ENCODE measurements at regions of chr6 and their contacts with region 1.

Region 1: DNA sequence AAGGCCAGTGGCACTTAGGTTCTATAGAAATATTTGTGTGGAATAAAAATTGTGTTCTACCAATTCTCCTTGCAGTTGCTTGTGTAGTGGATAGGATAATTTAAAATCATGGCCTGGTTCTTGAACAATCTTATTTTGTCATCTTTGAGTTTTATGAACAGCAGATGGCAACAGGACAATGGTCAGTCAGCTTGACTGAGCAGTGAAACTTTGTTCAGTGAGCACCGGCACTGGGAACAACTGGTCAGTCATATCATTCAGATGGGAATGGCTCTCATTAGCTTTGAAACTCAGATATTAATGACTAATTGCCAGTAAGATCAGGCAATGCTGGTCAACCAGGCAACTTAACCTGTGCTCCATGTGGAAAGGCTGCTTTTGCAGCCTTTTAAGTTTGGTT is 129.2 kb downstream of the BCKDHB start:
- DNase-seq: no peak
- H3K4me3 Mint-ChIP-seq: no peak overlapping the region
- H3K27ac Mint-ChIP-seq: no peak overlapping the region
- H3K4me1 Mint-ChIP-seq: no peaks in the 10 kb centered on the region
- H3K27me3 Mint-ChIP-seq: no peaks in the 10 kb centered on the region

Region 2: DNA sequence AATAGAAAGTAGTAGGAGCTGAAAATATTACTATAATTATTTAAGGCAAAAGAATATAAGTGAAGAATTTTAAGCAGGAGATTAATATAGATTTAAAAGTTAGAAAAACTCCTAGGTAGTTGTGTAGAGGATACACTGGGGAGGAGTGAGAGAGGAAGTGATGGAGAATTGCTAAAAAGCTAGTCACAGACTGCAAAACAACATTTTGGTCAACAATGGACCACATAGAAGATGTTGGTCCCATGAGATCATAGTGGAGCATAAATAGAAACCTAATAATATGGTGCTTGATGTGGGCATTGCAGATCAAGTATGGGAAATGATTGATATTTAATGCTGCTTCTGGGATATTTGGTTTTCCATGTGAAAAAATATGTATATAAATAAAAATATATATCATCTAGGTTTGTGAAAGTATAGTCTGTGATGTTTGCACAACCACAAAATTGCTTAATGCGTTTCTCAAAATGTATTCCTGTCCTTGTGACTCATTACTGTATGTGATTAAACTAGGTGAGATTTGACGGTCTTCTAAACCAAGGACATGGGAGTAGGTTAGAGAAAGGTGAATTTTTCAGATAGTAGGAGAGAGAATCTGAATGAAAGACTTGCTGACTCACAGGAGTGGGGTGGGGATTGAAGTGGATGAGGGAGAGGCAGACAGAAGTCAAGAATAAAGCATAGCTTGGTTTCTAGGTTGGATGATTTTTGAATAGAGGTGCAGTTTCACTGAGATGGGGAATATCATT is 44.8 kb after region 1 on chr6:
- CTCF ChIA-PET with region 1: no interaction called
- POLR2A ChIA-PET with region 1: no interaction called
- intact Hi-C with region 1: loop called (anchors 5 kb)
- DNase-seq: peak; percentile 9
- H3K4me3 Mint-ChIP-seq: no peak overlapping the region
- H3K27ac Mint-ChIP-seq: no peak overlapping the region
- H3K4me1 Mint-ChIP-seq: peaks cover 11% of the 10 kb centered on the region
- H3K27me3 Mint-ChIP-seq: no peaks in the 10 kb centered on the region

Measured in activated CD4-positive, alpha-beta memory T cell treated with anti-CD3 and anti-CD28 coated beads for 36 hours (primary cell).